Mammary epithelial cell (primary cell): ENCODE measurements at regions of chr11 and their contacts with region 1.

Region 1: GRCh38 chr11:8209208-8209807 is 40.5 kb upstream of the RIC3 start:
- DNase-seq: no peak
- H3K4me3 ChIP-seq: no peak overlapping the region
- H3K27ac ChIP-seq: no peak overlapping the region
- H3K4me1 ChIP-seq: no peaks in the 10 kb centered on the region
- H3K27me3 ChIP-seq: peaks cover 2% of the 10 kb centered on the region
- CTCF ChIP-seq: peak; percentile 45 to 48

Region 2: GRCh38 chr11:8138526-8138925 is 70.8 kb before region 1 on chr11:
- CTCF ChIA-PET with region 1: no interaction called
- dilution Hi-C with region 1: no loop called
- in situ Hi-C with region 1: no loop called
- intact Hi-C with region 1: no loop called
- DNase-seq: peak; percentile 89
- H3K4me3 ChIP-seq: peak overlapping the region; percentile 32 to 44 (median 35)
- H3K27ac ChIP-seq: peak overlapping the region; percentile 76
- H3K4me1 ChIP-seq: peaks cover 12% of the 10 kb centered on the region
- H3K27me3 ChIP-seq: no peaks in the 10 kb centered on the region
- CTCF ChIP-seq: no peak

Region 3: DNA sequence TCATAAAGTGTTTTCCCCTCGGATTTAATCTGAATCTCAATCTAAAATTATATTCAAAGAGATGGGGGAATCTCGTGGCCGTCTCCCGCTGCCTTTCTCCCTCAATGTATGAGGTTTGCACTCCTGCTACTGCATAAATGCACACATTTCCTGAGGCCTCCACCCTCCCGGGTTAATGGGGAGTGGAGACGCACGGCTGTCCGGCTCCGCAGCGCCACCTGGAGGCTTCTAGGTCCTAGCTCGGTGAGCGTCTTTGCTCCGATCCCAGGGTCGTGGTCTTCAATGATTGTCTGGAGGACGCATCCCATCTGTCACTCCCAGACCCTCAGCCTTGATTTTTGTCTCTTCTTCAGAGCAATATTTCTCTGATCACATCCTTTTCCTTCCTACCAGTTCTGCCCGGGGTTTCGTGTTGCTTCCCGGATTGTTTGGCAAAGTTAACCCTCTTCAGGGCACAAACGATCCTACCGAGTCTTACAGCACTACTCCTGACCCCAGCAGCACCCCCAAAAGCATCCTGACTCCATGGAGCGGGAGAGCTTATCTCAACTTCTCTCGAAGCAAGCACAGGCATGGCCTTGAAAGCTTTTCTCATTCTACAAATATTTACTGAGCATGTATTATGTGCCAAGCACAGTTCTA is 54.6 kb after region 1 on chr11 and contains the start of gene LMO1:
- CTCF ChIA-PET with region 1: no interaction called
- dilution Hi-C with region 1: no loop called
- in situ Hi-C with region 1: loop called in 1 of 2 experiments (anchors 10 kb)
- intact Hi-C with region 1: no loop called
- DNase-seq: peak; percentile 49
- H3K4me3 ChIP-seq: peak within 1 kb of the TSS; percentile 28 to 42 (median 33)
- H3K27ac ChIP-seq: no peak within 1 kb of the TSS
- H3K4me1 ChIP-seq: peaks cover 31% of the 10 kb centered on the region
- H3K27me3 ChIP-seq: peaks cover 50% of the 10 kb centered on the region
- CTCF ChIP-seq: peak; percentile 76 to 95
- total RNA-seq, gene LMO1: 0.17 to 0.54 TPM